Activated CD4-positive, alpha-beta memory T cell treated with anti-CD3 and anti-CD28 coated beads, Interleukin-2, amount 10 ng/mL, durations not matched to agents 7 days and 5 days (primary cell): ENCODE measurements at regions of chr16 and their contacts with region 1.

Region 1: GRCh38 chr16:81717662-81718189 is 61.4 kb upstream of the PLCG2 start:
- DNase-seq: peak; percentile 25
- H3K4me3 Mint-ChIP-seq: peak overlapping the region; percentile 61
- H3K27ac Mint-ChIP-seq: peak overlapping the region; percentile 73
- H3K4me1 Mint-ChIP-seq: peaks cover 49% of the 10 kb centered on the region
- H3K27me3 Mint-ChIP-seq: no peaks in the 10 kb centered on the region

Region 2: GRCh38 chr16:81632392-81633146 is 85.2 kb before region 1 on chr16:
- CTCF ChIA-PET with region 1: interaction called, 4 read pairs
- POLR2A ChIA-PET with region 1: interaction called, 10 read pairs
- DNase-seq: peak; percentile 81
- H3K4me3 Mint-ChIP-seq: peak overlapping the region; percentile 58
- H3K27ac Mint-ChIP-seq: peak overlapping the region; percentile 95
- H3K4me1 Mint-ChIP-seq: peaks cover 51% of the 10 kb centered on the region
- H3K27me3 Mint-ChIP-seq: no peaks in the 10 kb centered on the region

Region 3: DNA sequence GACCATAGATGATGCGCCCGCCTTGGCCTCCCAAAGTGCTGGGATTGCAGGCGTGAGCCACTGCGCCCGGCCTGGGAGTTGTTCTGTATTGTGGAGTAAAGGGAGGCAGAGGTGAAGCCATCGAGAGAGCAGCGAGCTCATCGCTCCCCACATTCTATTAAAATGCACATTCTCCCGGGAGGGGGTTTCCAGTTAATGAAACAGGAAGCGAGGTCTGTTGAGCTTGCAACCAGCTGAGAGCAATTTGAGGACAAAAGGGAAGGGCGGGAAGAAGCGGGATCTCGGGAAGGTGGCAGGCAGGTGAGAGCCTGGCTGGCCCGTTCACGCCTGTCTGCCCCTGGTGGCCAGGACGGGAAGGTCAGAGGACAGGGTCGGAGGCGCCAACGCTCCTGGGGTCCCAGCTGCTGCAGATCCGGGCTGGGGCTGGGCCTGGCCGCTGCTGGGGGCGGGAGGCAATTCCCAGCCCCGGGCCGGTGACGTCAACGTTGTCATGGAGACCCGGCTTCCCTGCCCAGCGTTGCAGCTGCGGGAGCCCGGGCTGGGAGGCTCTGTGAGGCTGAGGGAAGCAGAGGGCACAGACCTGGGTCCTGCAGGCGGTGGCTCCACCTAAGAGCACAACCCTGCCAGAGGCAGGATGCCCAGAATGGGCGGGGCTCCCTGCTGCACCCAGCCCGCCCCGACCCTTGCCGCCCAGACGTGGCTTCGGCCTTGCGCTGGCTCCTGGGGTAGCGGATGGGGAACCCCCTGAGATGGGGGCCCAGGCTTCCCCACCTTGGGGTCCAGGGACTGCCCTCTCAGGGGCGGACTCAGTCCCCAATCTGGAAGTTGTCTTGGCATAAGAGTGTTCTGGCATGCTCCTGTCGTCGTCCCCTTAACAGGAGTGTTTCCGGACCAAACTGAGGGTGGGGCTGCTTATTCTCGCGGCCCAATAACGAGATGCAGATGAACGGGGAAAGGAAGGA is 12.6 kb after region 1 on chr16:
- CTCF ChIA-PET with region 1: interaction called, 22 read pairs
- POLR2A ChIA-PET with region 1: interaction called, 6 read pairs
- DNase-seq: peak; percentile 64
- H3K4me3 Mint-ChIP-seq: peak overlapping the region; percentile 68
- H3K27ac Mint-ChIP-seq: peak overlapping the region; percentile 86
- H3K4me1 Mint-ChIP-seq: peaks cover 25% of the 10 kb centered on the region
- H3K27me3 Mint-ChIP-seq: no peaks in the 10 kb centered on the region